MCF 10A (cell line): ENCODE measurements at regions of chr1 and their contacts with region 1.

Region 1: DNA sequence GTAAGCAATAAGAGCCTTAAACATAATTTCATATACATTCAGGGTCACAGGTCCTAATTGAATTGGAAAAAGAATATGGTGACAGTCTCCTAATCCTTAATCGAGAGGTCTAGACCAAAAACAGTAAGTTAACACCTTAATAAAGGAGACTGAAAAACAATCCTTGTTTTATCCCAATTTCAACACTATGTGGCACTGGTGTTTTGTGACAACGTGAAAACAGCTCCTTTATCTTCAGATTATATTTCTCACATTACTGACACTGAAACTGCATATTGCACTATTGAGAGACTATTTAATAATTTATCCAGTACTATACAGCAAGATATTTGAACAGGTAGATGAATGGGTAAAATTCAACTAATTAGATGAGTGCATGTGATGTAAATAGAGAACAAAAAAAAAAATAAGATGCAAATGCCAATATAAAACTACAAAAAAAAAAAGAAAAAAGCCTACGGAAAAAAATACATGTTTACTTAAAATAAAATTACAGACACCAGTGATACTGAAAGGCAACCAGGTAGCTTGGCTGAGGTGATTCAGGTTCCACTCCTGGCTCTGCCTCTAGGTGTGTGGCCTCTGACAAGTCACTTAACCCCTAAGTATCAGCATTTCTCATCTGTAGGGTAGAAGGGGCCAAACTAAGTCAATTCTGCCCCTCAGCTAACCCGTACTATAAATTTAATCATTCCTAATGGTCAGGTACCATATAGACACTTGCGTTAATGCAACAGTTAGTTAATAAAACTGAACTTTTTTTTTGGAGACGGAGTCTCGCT is 33.9 kb downstream of the TP53BP2 start:
- DNase-seq: peak; percentile 74
- H3K4me3 Mint-ChIP-seq: no peak overlapping the region
- H3K27ac Mint-ChIP-seq: no peak overlapping the region
- H3K4me1 Mint-ChIP-seq: peaks cover 28% of the 10 kb centered on the region
- H3K27me3 Mint-ChIP-seq: no peaks in the 10 kb centered on the region
- CTCF ChIP-seq: peak; percentile 86

Region 2: DNA sequence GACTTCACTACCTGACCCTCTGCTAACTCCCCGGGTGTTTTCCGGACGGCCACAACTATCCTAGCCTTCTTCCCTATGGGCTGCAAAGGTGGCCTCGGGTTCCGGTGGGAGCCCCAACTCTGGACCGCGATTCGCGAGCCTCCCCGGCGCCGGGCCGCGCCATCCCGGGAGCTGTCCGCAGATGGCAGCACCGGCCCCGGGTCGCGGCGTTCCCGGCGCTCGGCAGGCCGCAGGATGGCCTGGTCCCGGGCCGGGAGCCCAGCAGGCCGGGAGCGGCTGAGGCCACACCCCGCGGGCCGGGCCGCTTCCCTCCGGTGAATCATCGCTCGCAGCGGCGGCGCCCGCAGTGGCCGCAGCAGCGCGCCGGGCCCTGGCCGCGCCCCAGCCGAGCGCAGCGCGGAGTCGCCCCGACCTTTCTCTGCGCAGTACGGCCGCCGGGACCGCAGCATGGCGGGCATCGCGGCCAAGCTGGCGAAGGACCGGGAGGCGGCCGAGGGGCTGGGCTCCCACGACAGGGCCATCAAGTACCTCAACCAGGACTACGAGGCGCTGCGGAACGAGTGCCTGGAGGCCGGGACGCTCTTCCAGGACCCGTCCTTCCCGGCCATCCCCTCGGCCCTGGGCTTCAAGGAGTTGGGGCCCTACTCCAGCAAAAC is 99.5 kb before region 1 on chr1 and contains the start of gene CAPN2:
- CTCF ChIA-PET with region 1: interaction called, 9 read pairs
- POLR2A ChIA-PET with region 1: interaction called, 10 read pairs
- intact Hi-C with region 1: no loop called
- DNase-seq: peak; percentile 94
- H3K4me3 Mint-ChIP-seq: peak within 1 kb of the TSS; percentile 77
- H3K27ac Mint-ChIP-seq: peak within 1 kb of the TSS; percentile 88
- H3K4me1 Mint-ChIP-seq: peaks cover 61% of the 10 kb centered on the region
- H3K27me3 Mint-ChIP-seq: no peaks in the 10 kb centered on the region
- CTCF ChIP-seq: peak; percentile 98
- total RNA-seq, gene CAPN2: 513 and 622 TPM in 2 replicates

Region 3: GRCh38 chr1:223831755-223832636 is 20.2 kb after region 1 on chr1:
- CTCF ChIA-PET with region 1: interaction called, 28 read pairs
- POLR2A ChIA-PET with region 1: interaction called, 7 read pairs
- intact Hi-C with region 1: no loop called
- DNase-seq: peak; percentile 59
- H3K4me3 Mint-ChIP-seq: no peak overlapping the region
- H3K27ac Mint-ChIP-seq: peak overlapping the region; percentile 80
- H3K4me1 Mint-ChIP-seq: peaks cover 27% of the 10 kb centered on the region
- H3K27me3 Mint-ChIP-seq: no peaks in the 10 kb centered on the region
- CTCF ChIP-seq: peak; percentile 13

Region 4: DNA sequence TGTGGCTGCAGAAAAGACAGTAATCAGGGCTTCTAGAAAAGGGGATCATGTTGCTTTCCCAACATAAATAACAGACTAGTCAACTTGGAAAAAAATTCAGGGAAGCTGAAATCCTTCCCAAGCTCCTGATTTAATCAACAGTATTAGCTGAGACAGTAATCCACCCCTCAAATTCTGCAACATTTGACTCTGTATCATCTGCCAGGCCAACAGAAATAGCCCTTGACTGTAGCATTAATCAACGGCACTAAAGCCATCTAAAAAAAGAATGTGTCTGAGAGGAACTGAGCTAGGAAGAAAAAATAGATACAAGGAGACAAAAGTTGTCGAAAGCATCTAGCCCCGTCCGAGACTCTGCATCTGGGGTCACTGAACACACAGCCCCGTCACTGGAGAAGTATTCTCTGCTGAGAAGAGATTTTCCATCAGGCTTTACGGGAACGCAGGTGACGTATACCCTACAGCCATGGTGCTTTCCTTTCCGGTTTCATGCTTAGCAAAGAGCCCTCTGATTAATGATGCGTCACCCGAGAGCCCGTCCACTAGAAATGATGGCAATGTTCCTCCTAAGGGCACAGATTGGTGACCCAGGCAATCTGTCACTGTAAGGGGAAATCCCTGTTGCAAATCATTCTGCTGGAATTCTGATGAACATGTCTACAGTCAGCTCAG is 76.1 kb after region 1 on chr1:
- CTCF ChIA-PET with region 1: interaction called, 7 read pairs
- POLR2A ChIA-PET with region 1: interaction called, 5 read pairs
- intact Hi-C with region 1: loop called (anchors 5 kb)
- DNase-seq: peak; percentile 100
- H3K4me3 Mint-ChIP-seq: peak overlapping the region; percentile 68
- H3K27ac Mint-ChIP-seq: peak overlapping the region; percentile 95
- H3K4me1 Mint-ChIP-seq: peaks cover 25% of the 10 kb centered on the region
- H3K27me3 Mint-ChIP-seq: no peaks in the 10 kb centered on the region
- CTCF ChIP-seq: no peak

Region 5: GRCh38 chr1:224095867-224096266 is 284.0 kb after region 1 on chr1:
- CTCF ChIA-PET with region 1: no interaction called
- POLR2A ChIA-PET with region 1: no interaction called
- intact Hi-C with region 1: no loop called
- DNase-seq: no peak
- H3K4me3 Mint-ChIP-seq: no peak overlapping the region
- H3K27ac Mint-ChIP-seq: no peak overlapping the region
- H3K4me1 Mint-ChIP-seq: no peaks in the 10 kb centered on the region
- H3K27me3 Mint-ChIP-seq: peaks cover 48% of the 10 kb centered on the region
- CTCF ChIP-seq: no peak

Region 6: GRCh38 chr1:224106568-224107281 is 294.9 kb after region 1 on chr1:
- CTCF ChIA-PET with region 1: interaction called, 23 read pairs
- POLR2A ChIA-PET with region 1: interaction called, 4 read pairs
- intact Hi-C with region 1: loop called (anchors 5 kb)
- DNase-seq: peak; percentile 78
- H3K4me3 Mint-ChIP-seq: peak overlapping the region; percentile 35
- H3K27ac Mint-ChIP-seq: peak overlapping the region; percentile 29
- H3K4me1 Mint-ChIP-seq: peaks cover 7% of the 10 kb centered on the region
- H3K27me3 Mint-ChIP-seq: no peaks in the 10 kb centered on the region
- CTCF ChIP-seq: peak; percentile 55

Region 7: DNA sequence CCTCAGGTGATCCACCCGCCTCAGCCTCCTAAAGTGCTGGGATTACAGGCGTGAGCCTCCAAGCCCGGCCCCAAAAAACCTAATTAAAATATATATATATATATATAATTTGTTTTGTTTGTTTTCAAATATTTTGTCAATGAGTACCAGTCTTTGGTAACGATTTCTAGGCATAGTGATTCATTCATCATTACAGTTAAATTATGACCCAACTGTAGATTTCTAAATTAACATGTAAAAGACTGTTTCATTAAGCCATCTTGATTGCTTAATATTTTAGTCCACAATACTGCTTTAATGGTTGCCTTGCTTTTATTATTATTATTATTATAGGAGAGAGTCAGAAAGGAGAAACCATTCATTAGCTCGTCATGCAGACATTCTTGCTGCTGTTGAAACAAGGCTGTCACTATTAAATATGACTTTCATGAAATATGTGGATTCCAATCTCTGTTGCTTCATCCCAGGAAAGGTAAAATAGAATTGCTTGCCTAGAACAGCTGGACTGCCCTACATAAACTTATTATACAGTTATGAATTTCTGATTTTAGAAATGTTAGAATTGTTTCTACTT is 322.0 kb after region 1 on chr1:
- CTCF ChIA-PET with region 1: no interaction called
- POLR2A ChIA-PET with region 1: no interaction called
- intact Hi-C with region 1: no loop called
- DNase-seq: no peak
- H3K4me3 Mint-ChIP-seq: no peak overlapping the region
- H3K27ac Mint-ChIP-seq: peak overlapping the region; percentile 46
- H3K4me1 Mint-ChIP-seq: peaks cover 6% of the 10 kb centered on the region
- H3K27me3 Mint-ChIP-seq: no peaks in the 10 kb centered on the region
- CTCF ChIP-seq: no peak